PC-9 (cell line): ENCODE measurements at regions of chr5 and their contacts with region 1.

Region 1: DNA sequence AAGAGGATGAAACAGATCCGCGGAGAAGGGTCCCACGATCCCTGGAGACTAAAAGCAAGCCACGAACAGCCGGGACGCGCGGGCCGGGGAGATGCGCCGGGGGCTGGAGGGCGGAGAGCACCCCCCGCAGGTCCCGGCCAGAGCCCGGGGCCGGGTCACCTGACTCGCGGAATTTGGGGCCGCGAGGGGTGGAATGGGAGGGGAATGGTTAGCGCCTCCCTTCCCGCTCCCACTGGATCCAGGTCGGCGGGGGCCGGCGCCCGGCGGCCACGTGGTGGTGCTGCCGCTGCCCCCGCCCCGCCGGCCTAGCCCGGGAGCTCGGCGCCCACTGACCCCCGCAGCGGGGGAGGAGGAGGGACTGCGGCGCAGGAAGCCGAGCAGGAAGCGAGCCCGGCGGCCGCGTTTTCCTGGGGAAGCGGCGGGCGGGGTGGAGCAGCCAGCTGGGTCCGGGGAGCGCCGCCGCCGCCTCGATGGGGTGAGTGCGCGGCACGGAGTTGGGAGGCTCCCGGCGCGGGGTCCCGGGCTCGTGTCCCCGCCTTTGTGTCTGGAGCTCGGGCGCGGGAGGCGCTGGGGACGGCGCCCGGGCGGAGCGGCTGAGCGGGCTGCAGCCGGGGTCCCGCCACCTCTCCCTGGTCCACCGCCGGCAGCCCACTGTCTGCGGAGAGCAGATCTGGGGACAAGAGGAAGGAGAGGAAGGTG is at the start of gene RAI14:
- DNase-seq: peak; percentile 75 to 97
- H3K4me3 ChIP-seq: peak within 1 kb of the TSS; percentile 82
- H3K27ac ChIP-seq: peak within 1 kb of the TSS; percentile 87
- H3K4me1 ChIP-seq: peaks cover 46% of the 10 kb centered on the region
- H3K27me3 ChIP-seq: no peaks in the 10 kb centered on the region
- CTCF ChIP-seq: no peak
- total RNA-seq, gene RAI14: 133 and 145 TPM in 2 replicates

Region 2: DNA sequence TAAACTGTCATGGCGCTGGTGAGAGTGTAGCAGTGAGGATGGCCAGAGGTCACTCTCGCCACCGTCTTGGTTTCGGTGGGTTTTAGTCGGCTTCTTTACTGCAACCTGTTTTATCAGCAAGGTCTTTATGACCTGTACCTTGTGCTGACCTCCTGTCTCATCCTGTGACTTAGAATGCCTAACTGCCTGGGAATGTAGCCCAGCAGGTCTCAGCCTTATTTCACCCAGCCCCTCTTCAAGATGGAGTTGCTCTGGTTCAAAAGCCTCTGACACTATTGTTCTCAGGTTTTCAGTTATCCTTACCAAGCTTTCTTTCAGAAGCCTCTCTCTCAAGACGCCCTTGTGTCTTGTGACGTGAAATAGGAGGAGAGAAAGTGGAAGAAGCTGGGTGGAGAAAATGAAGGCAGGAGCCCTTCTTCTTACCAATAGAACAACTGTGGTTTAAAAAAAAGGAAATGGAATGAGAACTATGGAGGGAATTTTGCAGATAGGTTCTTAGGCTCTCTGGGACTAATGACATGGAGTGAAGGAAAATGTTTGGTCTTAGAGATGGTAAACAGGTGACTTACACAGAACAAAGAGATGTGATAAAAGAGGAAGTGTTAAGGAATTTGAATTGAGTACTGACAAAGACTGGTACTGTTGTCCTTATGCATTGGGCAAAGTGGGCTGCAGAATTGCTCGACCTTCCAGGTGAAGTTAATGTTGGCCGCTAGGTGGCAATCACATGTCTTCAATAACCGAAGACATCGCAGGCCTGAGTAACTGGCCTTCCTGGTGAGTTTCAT is 133.4 kb before region 1 on chr5:
- CTCF ChIA-PET with region 1: interaction called, 7 read pairs
- POLR2A ChIA-PET with region 1: interaction called, 4 read pairs
- intact Hi-C with region 1: loop called (anchors 1 kb)
- DNase-seq: peak; percentile 86 to 87
- H3K4me3 ChIP-seq: no peak overlapping the region
- H3K27ac ChIP-seq: peak overlapping the region; percentile 69
- H3K4me1 ChIP-seq: peaks cover 72% of the 10 kb centered on the region
- H3K27me3 ChIP-seq: no peaks in the 10 kb centered on the region
- CTCF ChIP-seq: peak; percentile 97

Region 3: GRCh38 chr5:34598177-34598794 is 57.9 kb before region 1 on chr5:
- CTCF ChIA-PET with region 1: no interaction called
- POLR2A ChIA-PET with region 1: interaction called, 3 read pairs
- intact Hi-C with region 1: loop called (anchors 1 kb)
- DNase-seq: peak; percentile 69 to 98
- H3K4me3 ChIP-seq: peak overlapping the region; percentile 6; the same call in 1 of the 2 replicates
- H3K27ac ChIP-seq: peak overlapping the region; percentile 88
- H3K4me1 ChIP-seq: peaks cover 43% of the 10 kb centered on the region
- H3K27me3 ChIP-seq: no peaks in the 10 kb centered on the region
- CTCF ChIP-seq: no peak

Region 4: GRCh38 chr5:34709861-34710673 is 53.9 kb after region 1 on chr5:
- CTCF ChIA-PET with region 1: no interaction called
- POLR2A ChIA-PET with region 1: no interaction called
- intact Hi-C with region 1: loop called (anchors 2 kb)
- DNase-seq: peak; percentile 49 to 62
- H3K4me3 ChIP-seq: no peak overlapping the region
- H3K27ac ChIP-seq: peak overlapping the region; percentile 30
- H3K4me1 ChIP-seq: peaks cover 12% of the 10 kb centered on the region
- H3K27me3 ChIP-seq: no peaks in the 10 kb centered on the region
- CTCF ChIP-seq: no peak

Region 5: GRCh38 chr5:34803974-34804732 is 148.0 kb after region 1 on chr5:
- CTCF ChIA-PET with region 1: no interaction called
- POLR2A ChIA-PET with region 1: no interaction called
- intact Hi-C with region 1: loop called (anchors 5 kb)
- DNase-seq: no peak
- H3K4me3 ChIP-seq: no peak overlapping the region
- H3K27ac ChIP-seq: no peak overlapping the region
- H3K4me1 ChIP-seq: no peaks in the 10 kb centered on the region
- H3K27me3 ChIP-seq: no peaks in the 10 kb centered on the region
- CTCF ChIP-seq: no peak

Region 6: GRCh38 chr5:34898258-34898895 is 242.2 kb after region 1 on chr5:
- CTCF ChIA-PET with region 1: interaction called, 4 read pairs
- POLR2A ChIA-PET with region 1: no interaction called
- intact Hi-C with region 1: loop called (anchors 1 kb)
- DNase-seq: peak; percentile 71 to 84
- H3K4me3 ChIP-seq: no peak overlapping the region
- H3K27ac ChIP-seq: no peak overlapping the region
- H3K4me1 ChIP-seq: peaks cover 17% of the 10 kb centered on the region
- H3K27me3 ChIP-seq: no peaks in the 10 kb centered on the region
- CTCF ChIP-seq: peak; percentile 98